AG04450 (cell line): ENCODE measurements at regions of chr14 and their contacts with region 1.

Region 1: DNA sequence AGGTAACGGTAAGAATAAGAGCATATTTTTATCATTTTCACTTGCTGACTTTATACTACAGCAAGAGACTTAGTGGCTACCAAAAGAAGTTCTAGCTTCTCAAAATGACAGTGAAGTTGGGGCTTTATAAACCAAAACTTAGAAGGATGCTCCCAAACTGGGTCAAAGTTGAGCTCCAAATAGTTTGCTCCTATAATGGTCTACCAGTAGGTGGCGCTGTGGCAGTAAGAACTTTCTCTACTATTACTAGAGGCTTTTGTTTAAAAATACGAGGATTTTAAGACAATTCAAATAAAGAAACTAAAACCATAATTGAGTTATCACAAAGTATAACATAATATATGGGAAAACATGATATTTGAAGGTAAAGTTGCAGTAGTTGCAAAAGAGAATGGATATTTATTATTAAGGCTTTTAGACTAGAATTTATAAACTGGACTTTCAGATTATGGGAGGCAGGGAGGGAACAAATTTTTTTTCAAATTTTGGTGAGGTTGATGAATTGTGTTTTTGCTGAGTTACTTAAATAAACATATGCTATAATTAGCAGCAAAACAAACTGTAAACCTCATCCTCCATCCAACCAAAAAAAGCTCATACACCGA is 75.0 kb downstream of the TGFB3 start:
- DNase-seq: peak; percentile 36
- H3K4me3 ChIP-seq: no peak overlapping the region
- H3K27ac ChIP-seq: no peak overlapping the region
- H3K27me3 ChIP-seq: no peaks in the 10 kb centered on the region
- CTCF ChIP-seq: peak; percentile 88

Region 2: GRCh38 chr14:75800792-75801191 is 106.0 kb before region 1 on chr14:
- CTCF ChIA-PET with region 1: interaction called, 11 read pairs
- POLR2A ChIA-PET with region 1: no interaction called
- DNase-seq: no peak
- H3K4me3 ChIP-seq: no peak overlapping the region
- H3K27ac ChIP-seq: no peak overlapping the region
- H3K27me3 ChIP-seq: no peaks in the 10 kb centered on the region
- CTCF ChIP-seq: no peak

Region 3: DNA sequence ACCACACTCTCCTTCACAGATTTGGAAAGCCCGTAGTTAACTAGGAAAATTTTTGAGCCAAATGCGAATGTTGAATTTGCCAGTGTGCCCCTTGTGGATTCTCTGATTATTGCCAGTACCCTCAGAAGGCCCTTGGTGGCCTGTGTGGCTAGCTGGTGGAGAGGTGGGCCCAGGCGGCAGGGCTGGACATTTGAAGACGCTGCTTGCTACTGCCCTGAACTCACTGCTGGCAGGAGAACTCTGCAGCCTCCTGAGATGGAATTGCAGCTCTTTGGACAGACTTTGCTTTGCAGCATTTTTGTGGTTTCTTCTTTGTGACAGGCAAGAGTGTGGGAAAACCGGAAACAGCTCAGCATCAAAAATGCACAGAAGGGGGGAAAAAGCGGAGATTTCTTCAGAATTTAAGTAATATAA is 22.6 kb before region 1 on chr14:
- CTCF ChIA-PET with region 1: interaction called, 45 read pairs
- POLR2A ChIA-PET with region 1: no interaction called
- DNase-seq: peak; percentile 60
- H3K4me3 ChIP-seq: no peak overlapping the region
- H3K27ac ChIP-seq: no peak overlapping the region
- H3K27me3 ChIP-seq: no peaks in the 10 kb centered on the region
- CTCF ChIP-seq: peak; percentile 40

Region 4: GRCh38 chr14:75928690-75929181 is 22.0 kb after region 1 on chr14:
- CTCF ChIA-PET with region 1: interaction called, 19 read pairs
- POLR2A ChIA-PET with region 1: no interaction called
- DNase-seq: no peak
- H3K4me3 ChIP-seq: no peak overlapping the region
- H3K27ac ChIP-seq: no peak overlapping the region
- H3K27me3 ChIP-seq: no peaks in the 10 kb centered on the region
- CTCF ChIP-seq: no peak

Region 5: GRCh38 chr14:75976826-75977581 is 70.2 kb after region 1 on chr14:
- CTCF ChIA-PET with region 1: interaction called, 94 read pairs
- POLR2A ChIA-PET with region 1: interaction called, 10 read pairs
- DNase-seq: no peak
- H3K4me3 ChIP-seq: no peak overlapping the region
- H3K27ac ChIP-seq: no peak overlapping the region
- H3K27me3 ChIP-seq: no peaks in the 10 kb centered on the region
- CTCF ChIP-seq: no peak